Dorsolateral prefrontal cortex (tissue), 120 donors: ENCODE measurements at regions of chr4 and their contacts with region 1.

Region 1: GRCh38 chr4:177250056-177250696 is 59.5 kb upstream of the NEIL3 start:
- DNase-seq: peak in 9 of 10 donors; percentile 10 to 82 (median 59)
- H3K4me3 ChIP-seq: no peak overlapping the region
- H3K27ac ChIP-seq: no peak overlapping the region
- H3K27me3 ChIP-seq: no peaks in the 10 kb centered on the region
- CTCF ChIP-seq: peak; percentile 27 to 91 (median 76)

Region 2: GRCh38 chr4:177283167-177283566 is 33.0 kb after region 1 on chr4:
- intact Hi-C with region 1: no loop called
- DNase-seq: no peak
- H3K4me3 ChIP-seq: no peak overlapping the region
- H3K27ac ChIP-seq: no peak overlapping the region
- H3K27me3 ChIP-seq: no peaks in the 10 kb centered on the region
- CTCF ChIP-seq: no peak

Region 3: GRCh38 chr4:177315767-177316464 is 65.7 kb after region 1 on chr4:
- intact Hi-C with region 1: loop called in 1 of 2 experiments (anchors 2 kb)
- DNase-seq: no peak
- H3K4me3 ChIP-seq: no peak overlapping the region
- H3K27ac ChIP-seq: no peak overlapping the region
- H3K27me3 ChIP-seq: peaks cover 0 to 3% (median 0%) of the 10 kb centered on the region in 45 donors
- CTCF ChIP-seq: no peak

Region 4: GRCh38 chr4:177339477-177340374 is 89.5 kb after region 1 on chr4:
- intact Hi-C with region 1: loop called in 1 of 2 experiments (anchors 2 kb)
- DNase-seq: no peak
- H3K4me3 ChIP-seq: no peak overlapping the region
- H3K27ac ChIP-seq: no peak overlapping the region
- H3K27me3 ChIP-seq: no peaks in the 10 kb centered on the region
- CTCF ChIP-seq: peak; percentile 47 to 81 (median 68)